K562 (cell line): ENCODE measurements at regions of chr1 and their contacts with region 1.

Region 1: DNA sequence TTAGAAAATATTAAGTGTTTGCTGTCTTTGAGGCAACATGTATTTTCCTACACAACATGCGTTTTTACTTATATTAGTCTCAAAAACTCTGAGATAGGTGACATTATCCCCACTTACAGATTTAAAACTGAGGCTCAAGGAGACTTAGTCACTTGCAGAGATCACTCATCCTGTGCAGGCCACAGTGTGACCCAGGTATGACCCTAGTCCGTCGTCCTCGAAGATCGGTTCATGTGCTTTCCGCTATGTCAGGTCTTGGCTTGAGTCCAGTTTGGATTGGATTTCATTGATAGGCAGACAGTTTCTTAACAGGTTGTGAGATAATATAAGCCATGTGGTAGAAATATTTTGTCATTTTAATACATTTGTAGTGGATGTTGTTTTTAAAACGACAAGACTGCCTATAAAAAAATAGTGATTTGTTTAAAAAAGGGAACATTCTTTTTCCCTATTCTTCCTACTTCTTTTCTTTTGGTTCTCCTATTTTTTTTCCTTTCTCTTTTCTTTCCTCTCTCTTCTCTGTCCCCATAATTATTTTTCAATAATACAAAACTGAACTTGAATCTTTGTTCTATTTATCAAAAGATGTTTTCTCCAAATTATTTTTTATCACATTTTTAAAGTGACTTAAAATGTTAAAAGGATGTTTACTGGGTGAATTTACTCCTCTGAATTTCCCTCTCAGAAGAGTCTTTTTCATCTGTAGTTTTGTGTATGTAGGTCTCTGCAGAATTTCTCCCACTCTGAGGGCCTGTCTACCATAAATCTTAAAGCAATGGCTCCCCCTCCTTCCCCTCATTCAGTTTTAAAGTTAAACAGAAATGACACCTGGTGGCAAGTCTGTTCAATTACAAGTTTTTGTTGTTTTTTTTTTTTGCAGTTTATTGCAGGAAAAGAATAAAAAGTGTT is 81.8 kb downstream of the PHTF1 start:
- DNase-seq: peak; percentile 80 to 94 (median 83)
- ATAC-seq: peak; percentile 96
- H3K4me3 ChIP-seq: no peak overlapping the region
- H3K27ac ChIP-seq: no peak overlapping the region
- H3K4me1 ChIP-seq: peaks cover 0 to 32% of the 10 kb centered on the region in 2 experiments; a peak in 4 of 5 replicates
- H3K27me3 ChIP-seq: no peaks in the 10 kb centered on the region
- CTCF ChIP-seq: peak; percentile 59 to 85 (median 64)
- EP300 ChIP-seq: peak; percentile 76
- POLR2A ChIP-seq: no peak
- RAD21 ChIP-seq: peak; percentile 85 to 86

Region 2: GRCh38 chr1:113072757-113073478 is 604.6 kb before region 1 on chr1 and contains the start of gene LRIG2:
- CTCF ChIA-PET with region 1: interaction called, 4 read pairs
- POLR2A ChIA-PET with region 1: no interaction called
- in situ Hi-C with region 1: no loop called
- intact Hi-C with region 1: loop called (anchors 2 kb)
- DNase-seq: peak; percentile 96 to 100 (median 97)
- ATAC-seq: peak; percentile 97
- H3K4me3 ChIP-seq: peak within 1 kb of the TSS; percentile 96
- H3K27ac ChIP-seq: peak within 1 kb of the TSS; percentile 96
- H3K4me1 ChIP-seq: peaks cover 16% of the 10 kb centered on the region in 2 experiments
- H3K27me3 ChIP-seq: no peaks in the 10 kb centered on the region
- CTCF ChIP-seq: peak; percentile 75 to 97 (median 95)
- EP300 ChIP-seq: no peak; the same call in 1 of the 2 replicates
- POLR2A ChIP-seq: peak; percentile 98
- RAD21 ChIP-seq: peak; percentile 81 to 87
- polyA plus RNA-seq, gene LRIG2: 1.8 to 3.3 TPM

Region 3: GRCh38 chr1:113219377-113219776 is 458.1 kb before region 1 on chr1:
- CTCF ChIA-PET with region 1: no interaction called
- POLR2A ChIA-PET with region 1: no interaction called
- in situ Hi-C with region 1: no loop called
- intact Hi-C with region 1: loop called (anchors 5 kb)
- DNase-seq: peak in 2 of 4 experiments; percentile 29 to 56
- ATAC-seq: peak; percentile 75
- H3K4me3 ChIP-seq: no peak overlapping the region
- H3K27ac ChIP-seq: no peak overlapping the region
- H3K4me1 ChIP-seq: peaks cover 22 to 32% of the 10 kb centered on the region in 2 experiments
- H3K27me3 ChIP-seq: no peaks in the 10 kb centered on the region
- CTCF ChIP-seq: peak; percentile 52 to 64 (median 55)
- EP300 ChIP-seq: no peak
- POLR2A ChIP-seq: no peak
- RAD21 ChIP-seq: peak in 1 of 2 experiments; percentile 43; a peak in 2 of 4 replicates

Region 4: GRCh38 chr1:113663165-113663996 is 14.1 kb before region 1 on chr1:
- CTCF ChIA-PET with region 1: no interaction called
- POLR2A ChIA-PET with region 1: interaction called, 12 read pairs
- in situ Hi-C with region 1: no loop called
- intact Hi-C with region 1: no loop called
- DNase-seq: no peak
- ATAC-seq: no peak
- H3K4me3 ChIP-seq: no peak overlapping the region
- H3K27ac ChIP-seq: no peak overlapping the region
- H3K4me1 ChIP-seq: peaks cover 3 to 18% of the 10 kb centered on the region in 2 experiments; a peak in 4 of 5 replicates
- H3K27me3 ChIP-seq: no peaks in the 10 kb centered on the region
- CTCF ChIP-seq: no peak
- EP300 ChIP-seq: no peak
- POLR2A ChIP-seq: no peak
- RAD21 ChIP-seq: no peak